ENCODE measurements at regions of chr19 and their contacts with region 1.

Region 1: GRCh38 chr19:1780272-1780958 is 27.1 kb downstream of the ONECUT3 start:
- DNase-seq: no peak
- H3K4me3 Mint-ChIP-seq: no peak overlapping the region
- H3K27ac Mint-ChIP-seq: no peak overlapping the region
- H3K4me1 Mint-ChIP-seq: no peaks in the 10 kb centered on the region
- H3K27me3 Mint-ChIP-seq: peaks cover 55% of the 10 kb centered on the region

Region 2: DNA sequence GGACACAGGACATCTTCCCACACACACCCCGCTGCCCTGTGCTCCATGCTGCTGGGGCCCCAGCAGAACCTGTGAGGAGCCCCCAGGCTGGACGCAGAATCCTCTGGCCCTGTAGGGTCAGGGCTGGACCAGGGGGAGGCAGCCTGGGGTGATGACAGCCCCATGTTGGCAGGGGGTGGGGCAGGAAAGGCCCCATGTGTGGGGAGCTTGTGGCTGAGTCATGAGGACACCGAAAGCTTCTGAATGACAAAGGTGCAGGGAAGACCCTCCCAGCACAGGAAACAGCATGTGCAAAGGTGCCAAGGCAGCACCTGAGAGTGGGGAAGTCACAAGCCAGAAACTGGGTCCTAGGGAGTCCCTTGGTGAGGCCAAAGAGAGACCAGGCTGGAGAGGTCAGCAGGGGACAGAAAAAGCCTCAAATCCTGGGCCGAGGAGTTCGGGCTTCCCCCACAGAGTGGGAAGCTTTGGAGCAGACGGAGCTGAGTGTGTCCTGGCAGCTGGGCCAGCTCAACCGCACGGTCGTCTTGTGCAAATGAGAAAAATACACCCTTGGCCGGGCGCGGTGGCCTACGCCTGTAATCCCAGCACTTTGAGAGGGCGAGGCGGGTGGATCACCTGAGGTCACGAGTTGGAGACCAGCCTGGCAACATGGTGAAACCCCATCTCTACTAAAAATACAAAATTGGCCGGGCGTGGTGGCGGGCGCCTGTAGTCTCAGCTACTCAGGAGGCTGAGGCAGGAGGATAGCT is 14.2 kb after region 1 on chr19:
- CTCF ChIA-PET with region 1: interaction called, 32 read pairs
- POLR2A ChIA-PET with region 1: no interaction called
- intact Hi-C with region 1: no loop called
- DNase-seq: peak; percentile 22
- H3K4me3 Mint-ChIP-seq: no peak overlapping the region
- H3K27ac Mint-ChIP-seq: no peak overlapping the region
- H3K4me1 Mint-ChIP-seq: peaks cover 3% of the 10 kb centered on the region
- H3K27me3 Mint-ChIP-seq: peaks cover 15% of the 10 kb centered on the region

Region 3: DNA sequence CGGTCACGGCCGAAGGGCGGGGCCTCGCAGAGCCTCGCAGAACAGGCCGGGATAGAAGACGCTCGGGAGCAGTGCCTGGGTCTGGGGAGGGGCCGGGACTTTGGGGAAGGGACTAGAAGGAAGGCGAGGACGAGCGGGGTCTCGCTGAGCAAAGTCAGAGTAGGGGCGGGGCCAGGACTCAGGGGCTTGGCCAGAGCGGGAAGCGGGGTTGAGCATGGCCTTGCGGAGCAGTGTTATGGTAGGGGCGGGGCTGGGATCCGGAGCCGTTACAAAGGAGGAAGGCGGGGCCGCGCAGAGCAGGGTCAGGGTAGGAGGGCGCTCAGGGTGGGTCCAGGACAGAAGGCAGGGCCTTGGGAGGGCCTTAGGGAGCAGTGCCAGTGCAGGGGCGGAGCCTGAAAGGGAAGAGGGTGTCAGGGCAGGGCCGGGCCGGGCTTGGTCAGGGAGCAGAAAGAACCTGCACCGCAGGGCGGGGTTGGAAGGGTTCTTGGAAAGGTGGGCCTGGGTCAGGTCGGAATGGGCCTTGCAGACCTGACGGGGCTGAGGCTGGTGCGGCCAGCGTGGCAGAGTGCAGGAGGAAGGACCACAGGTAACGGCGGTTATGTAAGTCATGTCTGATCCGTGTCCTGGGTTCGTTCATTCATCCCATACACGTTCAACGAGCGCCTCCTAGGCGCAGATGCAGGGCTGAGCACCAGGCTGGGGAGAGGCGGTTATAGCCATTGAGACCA is 32.2 kb after region 1 on chr19:
- CTCF ChIA-PET with region 1: no interaction called
- POLR2A ChIA-PET with region 1: no interaction called
- intact Hi-C with region 1: no loop called
- DNase-seq: peak; percentile 95
- H3K4me3 Mint-ChIP-seq: peak overlapping the region; percentile 84
- H3K27ac Mint-ChIP-seq: peak overlapping the region; percentile 87
- H3K4me1 Mint-ChIP-seq: peaks cover 16% of the 10 kb centered on the region
- H3K27me3 Mint-ChIP-seq: no peaks in the 10 kb centered on the region